B cell (primary cell): ENCODE measurements at regions of chr22 and their contacts with region 1.

Region 1: GRCh38 chr22:25582946-25583345 is 18.5 kb downstream of the GRK3 start:
- DNase-seq: no peak
- ATAC-seq: no peak
- H3K4me3 ChIP-seq: no peak overlapping the region
- H3K4me3 Mint-ChIP-seq: no peak overlapping the region
- H3K27ac ChIP-seq: peak overlapping the region in 1 of 2 donors; percentile 59
- H3K27ac Mint-ChIP-seq: peak overlapping the region; percentile 80
- H3K4me1 ChIP-seq: peaks cover 23 to 27% of the 10 kb centered on the region in 2 donors
- H3K4me1 Mint-ChIP-seq: peaks cover 70% of the 10 kb centered on the region
- H3K27me3 ChIP-seq: no peaks in the 10 kb centered on the region
- H3K27me3 Mint-ChIP-seq: no peaks in the 10 kb centered on the region
- CTCF ChIP-seq: no peak

Region 2: DNA sequence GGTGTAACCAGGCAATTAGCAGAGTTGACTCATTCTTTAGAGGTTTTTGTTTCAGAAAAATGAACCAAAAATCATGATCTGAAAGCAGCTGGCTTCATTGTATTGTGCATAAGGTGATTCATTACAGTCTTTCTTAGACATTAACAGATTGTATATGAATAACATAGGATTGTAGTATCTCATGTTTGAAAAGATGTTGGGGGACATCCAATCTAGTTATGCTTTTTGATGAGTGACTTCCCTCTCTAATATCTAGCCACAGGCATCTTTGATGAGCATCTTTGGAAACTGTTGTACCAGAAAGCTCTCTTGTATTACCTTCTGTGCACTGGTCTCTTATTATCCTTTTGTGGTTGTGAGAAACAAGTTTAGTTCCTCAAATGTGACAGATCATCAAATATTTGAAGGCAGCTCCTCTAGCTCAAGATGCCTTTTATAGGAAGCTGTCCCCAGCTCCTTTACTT is 10.2 kb before region 1 on chr22:
- CTCF ChIA-PET with region 1: no interaction called
- POLR2A ChIA-PET with region 1: interaction called, 11 read pairs
- intact Hi-C with region 1: no loop called
- DNase-seq: no peak
- ATAC-seq: peak; percentile 31
- H3K4me3 ChIP-seq: no peak overlapping the region
- H3K4me3 Mint-ChIP-seq: peak overlapping the region; percentile 42
- H3K27ac ChIP-seq: peak overlapping the region in 1 of 2 donors; percentile 1
- H3K27ac Mint-ChIP-seq: peak overlapping the region; percentile 28
- H3K4me1 ChIP-seq: peaks cover 40 to 42% of the 10 kb centered on the region in 2 donors
- H3K4me1 Mint-ChIP-seq: peaks cover 74% of the 10 kb centered on the region
- H3K27me3 ChIP-seq: no peaks in the 10 kb centered on the region
- H3K27me3 Mint-ChIP-seq: no peaks in the 10 kb centered on the region
- CTCF ChIP-seq: no peak

Region 3: GRCh38 chr22:25623310-25623734 is 40.4 kb after region 1 on chr22:
- CTCF ChIA-PET with region 1: no interaction called
- POLR2A ChIA-PET with region 1: no interaction called
- intact Hi-C with region 1: no loop called
- DNase-seq: no peak
- ATAC-seq: no peak
- H3K4me3 ChIP-seq: no peak overlapping the region
- H3K4me3 Mint-ChIP-seq: peak overlapping the region; percentile 30
- H3K27ac ChIP-seq: no peak overlapping the region
- H3K27ac Mint-ChIP-seq: peak overlapping the region; percentile 50
- H3K4me1 ChIP-seq: peaks cover 37 to 41% of the 10 kb centered on the region in 2 donors
- H3K4me1 Mint-ChIP-seq: peaks cover 64% of the 10 kb centered on the region
- H3K27me3 ChIP-seq: no peaks in the 10 kb centered on the region
- H3K27me3 Mint-ChIP-seq: no peaks in the 10 kb centered on the region
- CTCF ChIP-seq: no peak

Region 4: DNA sequence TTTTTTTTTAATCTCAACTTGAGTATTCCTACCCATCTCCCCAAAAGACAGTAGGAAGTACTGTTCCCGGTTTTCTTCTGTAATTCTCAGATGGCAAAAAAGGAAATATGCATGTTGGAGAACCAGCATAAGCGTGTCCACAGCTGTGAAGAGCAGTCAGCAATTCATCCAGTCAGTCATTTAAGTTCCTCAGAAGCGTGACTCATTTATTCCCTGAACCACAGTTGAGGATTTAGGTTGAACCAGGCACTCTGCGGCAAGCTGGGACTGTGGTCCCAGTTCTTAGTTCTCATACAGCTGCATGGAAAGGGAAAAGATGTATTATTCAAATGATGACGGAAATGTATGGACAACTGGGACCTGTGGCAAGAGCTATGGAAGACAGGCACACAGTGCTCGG is 98.0 kb after region 1 on chr22:
- CTCF ChIA-PET with region 1: no interaction called
- POLR2A ChIA-PET with region 1: no interaction called
- intact Hi-C with region 1: no loop called
- DNase-seq: no peak
- ATAC-seq: no peak
- H3K4me3 ChIP-seq: no peak overlapping the region
- H3K4me3 Mint-ChIP-seq: no peak overlapping the region
- H3K27ac ChIP-seq: no peak overlapping the region
- H3K27ac Mint-ChIP-seq: no peak overlapping the region
- H3K4me1 ChIP-seq: no peaks in the 10 kb centered on the region
- H3K4me1 Mint-ChIP-seq: no peaks in the 10 kb centered on the region
- H3K27me3 ChIP-seq: no peaks in the 10 kb centered on the region
- H3K27me3 Mint-ChIP-seq: no peaks in the 10 kb centered on the region
- CTCF ChIP-seq: no peak